GM10248 (cell line): ENCODE measurements at regions of chr11 and their contacts with region 1.

Region 1: DNA sequence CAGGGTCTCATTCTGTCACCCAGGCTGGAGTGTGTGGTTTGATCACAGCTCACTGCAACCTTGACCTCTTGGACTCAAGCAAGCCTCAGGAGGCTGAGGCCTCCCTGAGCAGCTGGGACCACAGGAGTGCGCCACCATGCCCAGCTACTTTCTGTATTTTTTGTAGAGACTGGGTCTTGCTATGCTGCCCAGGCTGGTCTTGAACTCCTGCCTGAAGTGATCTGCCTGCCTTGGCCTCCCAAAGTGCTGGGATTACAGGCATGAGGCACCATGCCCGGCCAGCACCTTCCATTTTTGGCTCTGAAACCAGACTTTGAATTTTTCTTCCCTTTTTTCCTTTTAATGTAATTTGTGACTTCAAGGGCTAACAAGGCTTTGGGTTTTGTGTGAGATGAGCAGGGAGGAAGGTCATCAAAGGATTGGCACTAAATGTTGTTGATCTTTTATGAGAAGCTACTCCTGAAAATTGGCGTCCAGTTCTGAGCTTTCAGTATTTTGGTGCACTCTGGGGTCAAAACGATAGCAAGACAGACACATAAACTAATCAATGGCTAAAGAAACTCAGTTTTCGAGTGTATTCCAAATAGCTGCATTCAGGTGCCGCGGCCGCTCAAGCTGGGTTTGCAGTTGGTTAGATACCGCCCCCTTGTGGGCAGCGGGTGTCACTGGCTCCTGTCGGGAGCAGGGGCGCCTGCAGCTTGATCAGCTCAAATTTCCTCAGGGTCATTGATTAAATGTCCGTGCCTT is 51.9 kb upstream of the CLMP start:
- DNase-seq: peak; percentile 82
- CTCF ChIP-seq: peak; percentile 89

Region 2: DNA sequence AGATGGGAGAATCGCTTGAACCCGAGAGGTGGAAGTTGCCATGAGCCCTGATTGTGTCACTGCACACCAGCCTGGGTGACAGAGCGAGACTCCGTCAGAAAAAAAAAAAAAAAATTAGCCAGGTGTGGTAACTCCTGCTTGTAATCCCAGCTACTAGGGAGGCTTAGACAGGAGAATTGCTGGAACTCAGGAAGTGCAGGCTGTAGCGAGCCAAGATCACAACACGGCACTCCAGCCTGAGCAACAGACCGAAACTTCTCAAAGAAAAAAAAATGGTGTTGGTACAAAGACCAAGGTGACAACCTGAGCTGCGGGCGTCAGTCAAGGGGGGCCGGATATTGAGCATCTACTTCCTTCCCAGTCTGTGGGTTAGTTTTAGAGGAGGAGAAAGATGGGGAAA is 136.6 kb before region 1 on chr11:
- CTCF ChIA-PET with region 1: interaction called, 94 read pairs
- POLR2A ChIA-PET with region 1: no interaction called
- DNase-seq: no peak
- CTCF ChIP-seq: no peak

Region 3: GRCh38 chr11:123174196-123175183 is 72.4 kb before region 1 on chr11:
- CTCF ChIA-PET with region 1: interaction called, 12 read pairs
- POLR2A ChIA-PET with region 1: no interaction called
- DNase-seq: no peak
- CTCF ChIP-seq: no peak

Region 4: GRCh38 chr11:123235117-123235655 is 11.7 kb before region 1 on chr11:
- CTCF ChIA-PET with region 1: interaction called, 72 read pairs
- POLR2A ChIA-PET with region 1: no interaction called
- DNase-seq: no peak
- CTCF ChIP-seq: peak; percentile 8

Region 5: DNA sequence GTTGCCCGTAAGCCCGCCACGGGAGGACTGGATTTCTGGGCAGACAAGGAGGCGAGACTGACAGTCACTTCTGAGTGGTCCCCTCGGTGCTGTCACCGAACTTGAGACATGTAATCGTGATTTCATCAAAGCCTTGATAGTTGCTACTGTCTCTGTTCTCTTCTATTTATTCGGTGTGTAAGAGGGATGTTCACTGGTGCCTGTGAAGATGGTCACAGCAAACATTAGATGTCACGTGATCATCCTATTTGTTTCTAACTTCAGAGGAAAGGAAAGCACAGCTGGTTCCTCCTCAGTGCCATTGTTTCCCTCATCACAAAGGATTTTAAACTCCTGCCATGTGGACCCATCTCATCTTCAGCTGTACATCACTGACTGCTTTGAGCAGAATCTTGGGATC is 21.2 kb after region 1 on chr11:
- CTCF ChIA-PET with region 1: interaction called, 88 read pairs
- POLR2A ChIA-PET with region 1: no interaction called
- DNase-seq: no peak
- CTCF ChIP-seq: no peak